RWPE1 (cell line): ENCODE measurements at regions of chr7 and their contacts with region 1.

Region 1: GRCh38 chr7:52525772-52526341 is 509.6 kb upstream of the POM121L12 start:
- DNase-seq: no peak
- H3K27ac ChIP-seq: no peak overlapping the region
- CTCF ChIP-seq: no peak

Region 2: GRCh38 chr7:52179934-52180333 is 345.9 kb before region 1 on chr7:
- CTCF ChIA-PET with region 1: interaction called, 10 read pairs
- POLR2A ChIA-PET with region 1: no interaction called
- DNase-seq: no peak
- H3K27ac ChIP-seq: no peak overlapping the region
- CTCF ChIP-seq: no peak

Region 3: GRCh38 chr7:52410032-52410431 is 115.8 kb before region 1 on chr7:
- CTCF ChIA-PET with region 1: no interaction called
- POLR2A ChIA-PET with region 1: no interaction called
- DNase-seq: no peak
- H3K27ac ChIP-seq: no peak overlapping the region
- CTCF ChIP-seq: no peak